Activated CD4-positive, alpha-beta memory T cell treated with anti-CD3 and anti-CD28 coated beads for 36 hours (primary cell): ENCODE measurements at regions of chr12 and their contacts with region 1.

Region 1: GRCh38 chr12:8860165-8860961 is 37.9 kb downstream of the A2ML1 start:
- DNase-seq: peak; percentile 46
- H3K4me3 Mint-ChIP-seq: no peak overlapping the region
- H3K27ac Mint-ChIP-seq: no peak overlapping the region
- H3K4me1 Mint-ChIP-seq: no peaks in the 10 kb centered on the region
- H3K27me3 Mint-ChIP-seq: no peaks in the 10 kb centered on the region

Region 2: DNA sequence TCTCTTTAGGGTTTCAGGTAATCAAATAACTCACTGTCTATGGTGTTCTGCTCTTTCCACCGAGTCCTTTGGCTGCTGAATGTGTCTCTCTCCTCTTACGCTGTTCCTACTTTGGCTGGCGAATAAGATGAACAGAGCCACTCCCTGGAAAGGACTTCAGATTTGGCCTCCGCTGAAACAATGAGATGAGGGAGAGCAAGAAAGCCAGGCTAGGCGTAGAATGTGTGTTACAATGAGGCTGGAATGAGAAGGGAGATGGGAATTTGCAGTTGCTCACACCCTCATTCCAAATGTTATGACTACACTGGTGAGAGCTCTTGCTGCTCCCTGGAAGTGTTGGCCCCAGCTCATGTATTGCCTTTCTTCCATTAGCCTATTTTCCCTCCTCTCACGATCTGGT is 197.8 kb before region 1 on chr12 and contains the start of gene MFAP5:
- CTCF ChIA-PET with region 1: interaction called, 11 read pairs
- POLR2A ChIA-PET with region 1: no interaction called
- intact Hi-C with region 1: no loop called
- DNase-seq: no peak
- H3K4me3 Mint-ChIP-seq: no peak within 1 kb of the TSS
- H3K27ac Mint-ChIP-seq: no peak within 1 kb of the TSS
- H3K4me1 Mint-ChIP-seq: no peaks in the 10 kb centered on the region
- H3K27me3 Mint-ChIP-seq: peaks cover 5% of the 10 kb centered on the region
- total RNA-seq, gene MFAP5: not detected

Region 3: GRCh38 chr12:8687846-8688601 is 172.3 kb before region 1 on chr12:
- CTCF ChIA-PET with region 1: interaction called, 31 read pairs
- POLR2A ChIA-PET with region 1: no interaction called
- intact Hi-C with region 1: no loop called
- DNase-seq: no peak
- H3K4me3 Mint-ChIP-seq: no peak overlapping the region
- H3K27ac Mint-ChIP-seq: no peak overlapping the region
- H3K4me1 Mint-ChIP-seq: no peaks in the 10 kb centered on the region
- H3K27me3 Mint-ChIP-seq: no peaks in the 10 kb centered on the region

Region 4: GRCh38 chr12:8823565-8824300 is 36.6 kb before region 1 on chr12:
- CTCF ChIA-PET with region 1: no interaction called
- POLR2A ChIA-PET with region 1: no interaction called
- intact Hi-C with region 1: no loop called
- DNase-seq: no peak
- H3K4me3 Mint-ChIP-seq: no peak overlapping the region
- H3K27ac Mint-ChIP-seq: no peak overlapping the region
- H3K4me1 Mint-ChIP-seq: peaks cover 3% of the 10 kb centered on the region
- H3K27me3 Mint-ChIP-seq: peaks cover 1% of the 10 kb centered on the region

Region 5: DNA sequence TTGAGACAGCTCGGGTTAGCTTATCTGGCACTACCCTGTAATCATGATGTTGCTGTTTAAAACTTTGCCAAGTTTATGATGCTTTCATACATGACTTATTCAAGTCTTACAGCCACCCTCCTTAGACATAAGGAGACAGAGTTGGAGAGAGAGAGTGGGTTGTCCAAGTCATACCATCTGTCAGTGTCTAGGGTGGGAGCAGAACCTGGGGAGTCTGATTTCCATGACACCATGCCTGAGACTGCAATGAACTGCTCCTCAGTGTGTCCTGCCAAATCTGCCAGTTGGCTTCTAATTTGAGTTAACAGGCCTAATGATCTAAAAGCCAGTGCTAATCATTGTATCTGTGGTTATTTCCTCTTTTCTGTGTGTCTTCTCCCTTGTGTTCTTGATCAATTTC is 10.2 kb after region 1 on chr12:
- CTCF ChIA-PET with region 1: interaction called, 18 read pairs
- POLR2A ChIA-PET with region 1: interaction called, 3 read pairs
- intact Hi-C with region 1: no loop called
- DNase-seq: no peak
- H3K4me3 Mint-ChIP-seq: no peak overlapping the region
- H3K27ac Mint-ChIP-seq: no peak overlapping the region
- H3K4me1 Mint-ChIP-seq: no peaks in the 10 kb centered on the region
- H3K27me3 Mint-ChIP-seq: no peaks in the 10 kb centered on the region

Region 6: GRCh38 chr12:9039397-9039977 is 179.1 kb after region 1 on chr12:
- CTCF ChIA-PET with region 1: interaction called, 12 read pairs
- POLR2A ChIA-PET with region 1: no interaction called
- intact Hi-C with region 1: no loop called
- DNase-seq: no peak
- H3K4me3 Mint-ChIP-seq: no peak overlapping the region
- H3K27ac Mint-ChIP-seq: no peak overlapping the region
- H3K4me1 Mint-ChIP-seq: peaks cover 60% of the 10 kb centered on the region
- H3K27me3 Mint-ChIP-seq: no peaks in the 10 kb centered on the region